Psoas muscle (tissue), 8 donors: ENCODE measurements at regions of chr5 and their contacts with region 1.

Region 1: GRCh38 chr5:923281-923873 is 30.7 kb downstream of the TRIP13 start:
- DNase-seq: peak; percentile 84 to 89
- ATAC-seq: peak; percentile 82 to 90 (median 86)
- H3K4me3 ChIP-seq: no peak overlapping the region
- H3K27ac ChIP-seq: no peak overlapping the region
- H3K4me1 ChIP-seq: peaks cover 8% of the 10 kb centered on the region
- H3K27me3 ChIP-seq: peaks cover 2 to 46% (median 5%) of the 10 kb centered on the region in 3 donors
- CTCF ChIP-seq: peak; percentile 72

Region 2: DNA sequence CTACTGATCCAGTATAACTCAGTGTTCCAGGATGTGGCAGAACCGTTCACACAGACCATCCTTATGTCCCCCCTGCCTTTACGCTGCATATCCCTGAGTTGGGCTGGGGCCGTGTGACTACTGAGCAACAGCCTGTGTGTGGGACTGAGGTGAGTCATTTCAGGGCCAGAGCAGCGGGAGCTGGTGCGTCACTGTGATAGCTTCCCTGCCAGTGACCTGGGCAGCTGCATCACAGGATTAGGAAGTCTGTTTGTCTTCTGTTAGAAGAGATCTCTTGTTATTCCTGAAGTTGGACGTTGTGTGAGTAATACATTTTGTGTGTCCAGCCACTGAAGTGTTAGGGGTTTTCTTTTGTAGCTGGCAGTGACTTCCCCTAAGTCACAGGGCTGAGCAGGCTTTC is 265.8 kb before region 1 on chr5:
- intact Hi-C with region 1: no loop called
- DNase-seq: peak in 1 of 2 donors; percentile 4
- ATAC-seq: no peak
- H3K4me3 ChIP-seq: no peak overlapping the region
- H3K27ac ChIP-seq: no peak overlapping the region
- H3K4me1 ChIP-seq: no peaks in the 10 kb centered on the region
- H3K27me3 ChIP-seq: no peaks in the 10 kb centered on the region
- CTCF ChIP-seq: no peak

Region 3: DNA sequence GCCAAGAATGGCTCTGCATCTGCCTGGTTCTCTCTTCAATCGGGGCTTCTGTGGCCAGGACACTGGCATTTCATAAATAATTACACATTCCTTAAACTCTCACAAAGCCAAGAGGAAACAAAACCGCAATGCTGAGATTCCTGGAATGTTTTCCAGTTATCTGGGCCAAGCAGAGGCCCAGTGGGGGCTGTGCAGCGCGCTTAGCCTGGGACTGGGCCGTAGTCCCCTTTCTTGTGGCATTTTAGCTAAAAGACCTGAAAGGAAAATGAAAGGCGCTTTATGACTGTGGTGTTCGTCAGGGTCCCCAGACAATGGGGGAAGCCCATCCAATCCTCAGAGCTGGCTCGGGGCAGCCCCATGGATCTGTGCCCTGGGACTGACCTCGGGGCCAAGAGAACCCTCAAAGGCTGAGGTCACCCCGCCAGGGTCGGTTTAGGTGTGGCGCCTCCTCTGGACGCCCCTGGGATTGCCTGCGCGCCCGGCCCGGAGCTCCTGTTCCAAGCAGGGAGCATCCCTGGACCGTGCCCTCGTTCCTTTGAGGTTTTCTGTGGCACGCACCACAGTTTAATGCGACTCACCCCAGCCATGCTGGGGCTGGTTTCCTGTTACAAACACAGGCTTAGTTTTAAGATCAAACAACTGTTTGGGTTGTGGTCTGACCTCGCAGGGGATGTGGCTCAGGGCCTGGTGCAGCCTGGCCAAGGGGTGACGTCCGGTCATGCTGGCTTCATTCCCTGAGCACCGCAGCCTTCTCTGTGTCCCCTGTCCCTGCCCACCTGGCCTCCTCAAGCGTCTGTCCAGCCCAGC is 33.8 kb after region 1 on chr5:
- intact Hi-C with region 1: no loop called
- DNase-seq: peak; percentile 45 to 52
- ATAC-seq: peak; percentile 39 to 57 (median 45)
- H3K4me3 ChIP-seq: no peak overlapping the region
- H3K27ac ChIP-seq: no peak overlapping the region
- H3K4me1 ChIP-seq: peaks cover 5% of the 10 kb centered on the region
- H3K27me3 ChIP-seq: peaks cover 0 to 76% (median 23%) of the 10 kb centered on the region in 3 donors
- CTCF ChIP-seq: no peak

Region 4: DNA sequence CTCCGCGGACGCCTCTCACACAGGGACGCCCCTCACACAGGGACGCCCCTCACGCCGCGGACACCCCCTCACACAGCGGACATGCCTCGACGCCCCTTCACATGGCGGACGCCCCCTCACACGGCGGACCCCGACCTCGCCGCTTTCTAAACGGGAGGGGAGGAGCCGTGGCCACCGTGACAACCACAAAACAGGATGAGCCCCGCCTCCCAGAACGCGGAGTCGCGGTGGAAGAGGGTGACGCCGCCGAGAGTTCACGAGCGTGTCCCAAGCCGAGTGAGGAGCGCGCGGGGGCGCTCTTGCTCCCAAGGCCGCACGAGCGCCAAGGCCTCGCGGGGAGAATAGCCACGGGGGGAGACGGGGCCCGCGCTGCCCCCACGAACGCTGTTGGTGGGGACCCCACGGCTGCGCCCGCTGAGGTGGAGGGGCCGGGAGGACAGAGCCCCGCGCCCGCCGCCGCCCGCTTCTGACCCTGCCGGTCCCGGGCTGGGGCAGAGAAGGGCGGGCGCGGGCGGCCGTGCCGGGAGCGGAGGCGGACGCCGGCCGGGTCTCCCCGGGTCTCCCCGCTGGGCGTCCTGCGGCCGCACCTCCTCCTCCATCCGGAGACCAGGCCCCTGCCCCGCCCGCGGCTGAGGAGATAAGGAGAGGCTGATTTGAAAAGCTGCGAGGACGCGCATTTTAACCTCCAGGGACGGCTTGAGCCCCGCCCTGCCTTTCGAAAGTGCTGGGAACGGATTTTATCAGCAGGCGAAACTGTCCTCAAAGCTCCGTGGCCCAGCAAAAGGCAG is 81.3 kb after region 1 on chr5:
- intact Hi-C with region 1: loop called in 1 of 2 experiments (anchors 5 kb)
- DNase-seq: peak; percentile 84 to 87
- ATAC-seq: peak; percentile 68 to 84 (median 74)
- H3K4me3 ChIP-seq: peak overlapping the region; percentile 65
- H3K27ac ChIP-seq: no peak overlapping the region
- H3K4me1 ChIP-seq: no peaks in the 10 kb centered on the region
- H3K27me3 ChIP-seq: peaks cover 0 to 54% (median 13%) of the 10 kb centered on the region in 3 donors
- CTCF ChIP-seq: peak; percentile 35

Region 5: DNA sequence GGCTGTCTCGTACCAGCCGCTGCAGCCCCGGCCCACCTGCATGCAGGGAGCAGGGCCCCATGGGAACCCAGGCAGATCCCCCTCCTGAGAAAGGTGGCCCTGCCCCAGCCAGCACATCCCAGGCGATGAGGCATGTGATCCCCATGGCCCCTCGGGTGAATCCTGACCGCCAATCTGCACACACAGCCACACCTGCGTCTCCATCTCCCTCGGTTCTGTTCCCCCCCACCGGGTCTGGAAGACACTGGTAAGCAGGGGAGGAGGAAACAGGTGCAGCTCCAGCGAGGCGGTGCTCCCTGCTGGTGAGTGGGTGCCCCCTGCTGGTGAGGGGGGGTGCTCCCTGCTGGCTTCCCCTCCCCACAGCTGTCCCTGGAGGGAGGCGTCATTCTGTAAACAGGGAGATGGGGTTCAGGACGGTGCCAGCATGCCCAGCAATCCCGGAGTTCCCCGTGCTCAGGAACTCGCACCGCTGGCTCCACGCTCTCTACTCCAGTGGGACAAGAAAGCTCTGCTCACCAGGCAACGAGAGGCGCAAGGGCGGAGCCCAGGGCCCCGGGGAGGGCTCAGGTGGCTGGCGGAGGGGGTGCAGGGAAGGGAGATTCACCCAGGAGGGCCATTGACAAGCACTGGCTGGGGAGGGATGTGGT is 216.9 kb after region 1 on chr5:
- intact Hi-C with region 1: loop called in 1 of 2 experiments (anchors 2 kb)
- DNase-seq: peak; percentile 79 to 89
- ATAC-seq: peak; percentile 90 to 94 (median 91)
- H3K4me3 ChIP-seq: no peak overlapping the region
- H3K27ac ChIP-seq: no peak overlapping the region
- H3K4me1 ChIP-seq: no peaks in the 10 kb centered on the region
- H3K27me3 ChIP-seq: peaks cover 0 to 24% (median 6%) of the 10 kb centered on the region in 3 donors
- CTCF ChIP-seq: peak; percentile 86

Region 6: GRCh38 chr5:1174122-1174936 is 251.0 kb after region 1 on chr5:
- intact Hi-C with region 1: loop called (anchors 2 to 10 kb)
- DNase-seq: peak; percentile 65 to 77
- ATAC-seq: peak; percentile 75 to 86 (median 85)
- H3K4me3 ChIP-seq: no peak overlapping the region
- H3K27ac ChIP-seq: no peak overlapping the region
- H3K4me1 ChIP-seq: no peaks in the 10 kb centered on the region
- H3K27me3 ChIP-seq: peaks cover 0 to 16% (median 1%) of the 10 kb centered on the region in 3 donors
- CTCF ChIP-seq: peak; percentile 64

Region 7: GRCh38 chr5:1409381-1410110 is 486.2 kb after region 1 on chr5:
- intact Hi-C with region 1: no loop called
- DNase-seq: peak; percentile 7 to 42
- ATAC-seq: no peak
- H3K4me3 ChIP-seq: no peak overlapping the region
- H3K27ac ChIP-seq: no peak overlapping the region
- H3K4me1 ChIP-seq: no peaks in the 10 kb centered on the region
- H3K27me3 ChIP-seq: peaks cover 0 to 43% (median 10%) of the 10 kb centered on the region in 3 donors
- CTCF ChIP-seq: no peak